Common myeloid progenitor, CD34-positive (primary cell): ENCODE measurements at regions of chr3 and their contacts with region 1.

Region 1: GRCh38 chr3:5122030-5122740 is at the start of gene ARL8B:
- DNase-seq: peak; percentile 85 to 92 (median 91)
- H3K4me3 ChIP-seq: peak within 1 kb of the TSS; percentile 89 to 99 (median 95)
- H3K27ac ChIP-seq: peak within 1 kb of the TSS; percentile 86 to 94
- H3K4me1 ChIP-seq: peaks cover 19 to 42% (median 32%) of the 10 kb centered on the region in 4 experiments
- H3K27me3 ChIP-seq: no peaks in the 10 kb centered on the region

Region 2: GRCh38 chr3:5112043-5112442 is 10.1 kb before region 1 on chr3:
- CTCF ChIA-PET with region 1: interaction called, 17 read pairs
- POLR2A ChIA-PET with region 1: no interaction called
- DNase-seq: no peak
- H3K4me3 ChIP-seq: no peak overlapping the region
- H3K27ac ChIP-seq: no peak overlapping the region
- H3K4me1 ChIP-seq: peaks cover 0 to 9% (median 4%) of the 10 kb centered on the region in 4 experiments
- H3K27me3 ChIP-seq: no peaks in the 10 kb centered on the region

Region 3: DNA sequence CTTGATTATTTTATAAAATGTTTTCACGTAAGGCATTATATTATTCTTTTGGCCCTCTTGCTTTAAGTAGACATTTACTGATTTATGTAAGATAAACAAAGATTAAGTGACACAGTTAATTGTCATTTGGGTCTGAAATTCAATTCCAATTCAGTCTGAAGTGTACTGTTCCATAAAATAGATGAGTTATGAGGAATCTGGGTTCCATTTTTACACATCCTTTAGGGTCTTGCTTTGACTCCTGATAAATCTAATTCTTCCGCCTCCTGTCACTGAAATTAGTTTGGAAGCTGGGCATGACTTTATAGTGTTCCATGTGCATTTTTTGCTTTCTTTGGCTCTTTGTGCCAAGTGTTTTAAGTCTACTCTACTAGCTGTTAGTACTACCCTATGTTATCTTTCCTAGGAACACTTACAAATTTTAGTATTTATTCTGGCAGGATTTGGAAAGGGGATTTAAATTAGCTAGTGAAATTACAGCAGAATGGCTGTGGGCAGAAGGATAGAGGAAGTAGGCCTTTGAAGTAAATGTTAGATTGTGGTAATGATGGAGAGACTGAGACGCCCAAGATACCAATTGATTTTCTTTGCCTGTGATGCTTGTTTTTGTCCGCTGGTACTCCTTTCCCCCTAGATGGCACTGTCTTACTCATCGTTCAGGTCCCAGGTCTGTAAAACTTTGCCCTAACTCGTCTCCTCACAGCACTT is 14.2 kb after region 1 on chr3:
- CTCF ChIA-PET with region 1: interaction called, 42 read pairs
- POLR2A ChIA-PET with region 1: no interaction called
- DNase-seq: peak; percentile 75 to 90 (median 88)
- H3K4me3 ChIP-seq: no peak overlapping the region
- H3K27ac ChIP-seq: peak overlapping the region in 1 of 2 experiments; percentile 27
- H3K4me1 ChIP-seq: peaks cover 10 to 28% (median 23%) of the 10 kb centered on the region in 4 experiments
- H3K27me3 ChIP-seq: no peaks in the 10 kb centered on the region

Region 4: DNA sequence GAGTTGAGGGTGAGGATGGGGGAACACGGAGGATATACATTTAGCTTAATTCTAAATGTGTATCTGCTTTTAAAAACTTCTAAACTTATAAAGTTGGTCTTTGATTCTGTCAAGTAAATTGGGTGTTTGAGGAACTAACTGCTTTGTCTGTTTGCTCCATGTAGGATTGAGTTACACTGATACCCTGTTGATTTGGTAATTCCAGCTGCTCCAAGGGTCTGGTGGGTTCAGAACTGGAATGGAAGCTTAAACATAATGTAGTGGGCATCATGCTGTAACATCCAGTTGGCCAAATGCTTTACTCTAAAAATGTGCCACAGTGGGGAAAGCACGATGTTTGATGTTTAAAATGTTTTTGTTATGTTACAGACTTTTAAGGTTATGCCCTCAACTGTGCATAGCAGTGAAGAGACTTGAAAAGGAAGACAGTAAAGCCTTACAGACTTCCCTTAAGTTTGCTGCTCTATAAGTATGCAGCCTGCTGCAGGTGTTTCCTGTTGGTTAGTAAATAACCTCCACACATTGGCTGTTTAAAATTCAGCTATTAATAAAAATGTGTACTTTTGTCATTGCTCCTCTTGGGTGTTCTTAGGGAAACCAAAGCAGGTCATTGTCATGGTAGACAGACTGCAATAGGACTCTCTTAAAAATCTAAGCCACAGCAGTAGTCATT is 59.4 kb after region 1 on chr3:
- CTCF ChIA-PET with region 1: interaction called, 12 read pairs
- POLR2A ChIA-PET with region 1: interaction called, 6 read pairs
- DNase-seq: peak; percentile 71 to 97 (median 93)
- H3K4me3 ChIP-seq: peak overlapping the region in 5 of 7 experiments; percentile 13 to 61 (median 29)
- H3K27ac ChIP-seq: peak overlapping the region in 1 of 2 experiments; percentile 65
- H3K4me1 ChIP-seq: peaks cover 52 to 83% (median 81%) of the 10 kb centered on the region in 4 experiments
- H3K27me3 ChIP-seq: no peaks in the 10 kb centered on the region

Region 5: DNA sequence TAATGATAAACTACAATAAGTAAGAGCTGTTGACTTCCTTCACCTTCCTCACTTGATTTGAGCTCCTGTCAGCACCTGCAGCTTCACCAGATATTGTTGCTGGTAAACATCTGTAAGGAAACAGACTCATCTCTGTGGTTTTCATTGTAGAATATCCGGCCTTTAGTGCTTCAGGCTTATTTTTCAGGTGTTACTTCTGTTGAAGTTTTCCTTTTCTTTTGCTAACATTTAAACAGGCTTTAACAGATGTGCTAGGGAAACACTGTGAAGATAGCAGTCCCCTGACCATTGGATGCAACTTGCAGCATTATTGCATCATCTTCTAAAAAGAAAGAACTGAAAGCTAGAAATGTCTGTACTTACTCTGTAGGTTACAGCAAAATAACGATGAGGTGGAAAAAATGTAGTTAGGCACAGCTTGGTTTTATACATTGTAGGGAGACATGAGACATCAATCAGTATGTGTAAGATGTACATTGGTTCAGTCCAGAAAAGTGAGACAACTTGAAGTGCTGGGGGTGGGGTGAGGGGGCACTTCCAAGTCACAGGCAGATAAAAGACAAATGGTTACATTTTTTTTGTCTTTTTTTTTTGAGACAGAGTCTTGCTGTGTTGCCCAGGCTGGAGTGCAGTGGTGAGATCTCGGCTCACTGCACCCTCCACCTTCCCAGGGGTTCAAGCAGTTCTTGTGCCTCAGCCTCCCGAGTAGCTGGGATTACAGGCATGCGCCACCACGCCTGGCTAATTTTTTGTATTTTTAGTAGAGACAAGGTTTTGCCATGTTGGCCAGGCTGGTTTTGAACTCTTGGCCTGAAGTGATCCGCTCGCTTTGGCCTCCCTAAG is 75.5 kb after region 1 on chr3:
- CTCF ChIA-PET with region 1: interaction called, 13 read pairs
- POLR2A ChIA-PET with region 1: no interaction called
- DNase-seq: peak in 2 of 3 donors; percentile 53 to 73
- H3K4me3 ChIP-seq: no peak overlapping the region
- H3K27ac ChIP-seq: peak overlapping the region; percentile 13 to 60
- H3K4me1 ChIP-seq: peaks cover 25 to 53% (median 32%) of the 10 kb centered on the region in 4 experiments
- H3K27me3 ChIP-seq: no peaks in the 10 kb centered on the region